Heart left ventricle (tissue), 16 donors: ENCODE measurements at regions of chr5 and their contacts with region 1.

Region 1: DNA sequence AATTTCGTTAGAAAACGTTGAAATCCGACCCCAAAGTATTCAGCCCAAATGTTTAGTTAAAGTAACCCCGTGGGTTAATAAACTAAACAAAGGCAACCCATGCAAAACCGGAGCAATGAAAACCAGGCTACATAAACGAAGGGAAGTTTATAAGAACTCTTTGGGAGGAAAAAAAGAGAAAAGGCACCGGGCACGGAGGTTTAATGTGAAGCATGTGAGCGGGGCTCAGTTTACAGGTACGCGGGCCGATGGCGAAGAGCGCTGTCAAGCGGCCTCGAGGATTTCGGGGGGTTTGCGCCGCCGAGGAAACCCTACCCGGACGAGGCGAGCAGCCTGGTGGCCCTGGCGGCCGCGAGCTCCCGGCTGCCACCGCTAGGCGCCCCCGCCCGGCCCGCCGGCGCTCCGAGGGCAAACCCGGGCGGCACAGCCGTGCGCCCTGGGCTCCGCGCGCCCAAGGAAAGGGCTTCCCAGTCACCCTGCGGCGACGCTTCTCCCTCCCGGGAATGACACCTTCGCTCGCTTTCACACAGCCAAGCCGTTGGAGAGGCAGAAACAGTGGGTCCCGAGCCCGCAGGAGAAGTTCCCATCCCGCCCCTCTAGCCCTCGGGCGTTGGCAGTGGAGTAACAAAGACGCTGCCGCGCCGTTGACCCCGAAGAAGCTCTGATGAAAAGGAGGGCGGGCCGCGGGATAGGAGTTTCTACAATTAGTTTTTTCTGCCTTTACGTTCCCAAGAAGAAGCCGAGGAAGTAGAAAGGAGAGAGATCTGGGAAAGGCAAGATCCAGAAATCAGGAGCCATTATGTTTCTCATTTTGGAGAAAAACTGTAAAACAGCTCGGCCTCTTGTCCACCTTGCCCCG is 126.0 kb downstream of the TMEM174 start:
- DNase-seq: no peak
- ATAC-seq: no peak
- H3K4me3 ChIP-seq: peak overlapping the region in 2 of 12 donors; percentile 5 to 9
- H3K27ac ChIP-seq: no peak overlapping the region
- H3K4me1 ChIP-seq: peaks cover 0 to 30% (median 10%) of the 10 kb centered on the region in 12 donors
- H3K27me3 ChIP-seq: peaks cover 66 to 100% (median 86%) of the 10 kb centered on the region in 9 donors
- CTCF ChIP-seq: peak in 4 of 12 donors; percentile 10 to 32 (median 16)
- POLR2A ChIP-seq: no peak

Region 2: GRCh38 chr5:73135429-73136054 is 163.5 kb before region 1 on chr5:
- intact Hi-C with region 1: no loop called
- DNase-seq: no peak
- ATAC-seq: no peak
- H3K4me3 ChIP-seq: no peak overlapping the region
- H3K27ac ChIP-seq: no peak overlapping the region
- H3K4me1 ChIP-seq: peaks cover 0 to 3% (median 0%) of the 10 kb centered on the region in 12 donors
- H3K27me3 ChIP-seq: peaks cover 0 to 34% (median 7%) of the 10 kb centered on the region in 9 donors
- CTCF ChIP-seq: no peak
- POLR2A ChIP-seq: no peak

Region 3: DNA sequence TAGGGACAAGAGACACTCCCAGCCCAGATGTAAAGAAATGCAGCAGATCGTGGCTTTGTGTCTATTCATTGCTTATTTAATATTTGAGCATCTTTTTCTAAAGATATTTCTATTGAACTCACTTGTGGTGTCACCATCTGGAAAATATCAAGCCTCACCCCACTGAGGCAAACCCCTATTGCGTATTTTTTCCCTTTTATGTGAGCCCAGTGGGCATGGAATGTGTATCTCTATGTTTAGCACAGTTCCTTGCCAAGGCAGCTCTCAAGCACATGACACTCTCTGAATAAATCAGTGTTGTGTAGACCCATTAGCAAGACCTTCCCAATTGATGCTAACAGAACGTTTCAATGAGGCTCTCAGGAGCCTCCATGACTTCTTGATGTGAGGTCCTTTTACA is 44.4 kb before region 1 on chr5:
- intact Hi-C with region 1: loop called in 1 of 10 experiments (anchors 5 kb)
- DNase-seq: no peak
- ATAC-seq: no peak
- H3K4me3 ChIP-seq: no peak overlapping the region
- H3K27ac ChIP-seq: no peak overlapping the region
- H3K4me1 ChIP-seq: no peaks in the 10 kb centered on the region
- H3K27me3 ChIP-seq: peaks cover 0 to 34% (median 15%) of the 10 kb centered on the region in 9 donors
- CTCF ChIP-seq: no peak
- POLR2A ChIP-seq: no peak

Region 4: GRCh38 chr5:73354406-73354805 is 55.4 kb after region 1 on chr5:
- intact Hi-C with region 1: no loop called
- DNase-seq: no peak
- ATAC-seq: no peak
- H3K4me3 ChIP-seq: no peak overlapping the region
- H3K27ac ChIP-seq: no peak overlapping the region
- H3K4me1 ChIP-seq: no peaks in the 10 kb centered on the region
- H3K27me3 ChIP-seq: peaks cover 0 to 48% (median 20%) of the 10 kb centered on the region in 9 donors
- CTCF ChIP-seq: no peak
- POLR2A ChIP-seq: no peak

Region 5: GRCh38 chr5:73387149-73387591 is 88.2 kb after region 1 on chr5:
- intact Hi-C with region 1: no loop called
- DNase-seq: no peak
- ATAC-seq: no peak
- H3K4me3 ChIP-seq: no peak overlapping the region
- H3K27ac ChIP-seq: no peak overlapping the region
- H3K4me1 ChIP-seq: peaks cover 0 to 4% (median 0%) of the 10 kb centered on the region in 12 donors
- H3K27me3 ChIP-seq: peaks cover 9 to 75% (median 32%) of the 10 kb centered on the region in 9 donors
- CTCF ChIP-seq: no peak
- POLR2A ChIP-seq: no peak

Region 6: DNA sequence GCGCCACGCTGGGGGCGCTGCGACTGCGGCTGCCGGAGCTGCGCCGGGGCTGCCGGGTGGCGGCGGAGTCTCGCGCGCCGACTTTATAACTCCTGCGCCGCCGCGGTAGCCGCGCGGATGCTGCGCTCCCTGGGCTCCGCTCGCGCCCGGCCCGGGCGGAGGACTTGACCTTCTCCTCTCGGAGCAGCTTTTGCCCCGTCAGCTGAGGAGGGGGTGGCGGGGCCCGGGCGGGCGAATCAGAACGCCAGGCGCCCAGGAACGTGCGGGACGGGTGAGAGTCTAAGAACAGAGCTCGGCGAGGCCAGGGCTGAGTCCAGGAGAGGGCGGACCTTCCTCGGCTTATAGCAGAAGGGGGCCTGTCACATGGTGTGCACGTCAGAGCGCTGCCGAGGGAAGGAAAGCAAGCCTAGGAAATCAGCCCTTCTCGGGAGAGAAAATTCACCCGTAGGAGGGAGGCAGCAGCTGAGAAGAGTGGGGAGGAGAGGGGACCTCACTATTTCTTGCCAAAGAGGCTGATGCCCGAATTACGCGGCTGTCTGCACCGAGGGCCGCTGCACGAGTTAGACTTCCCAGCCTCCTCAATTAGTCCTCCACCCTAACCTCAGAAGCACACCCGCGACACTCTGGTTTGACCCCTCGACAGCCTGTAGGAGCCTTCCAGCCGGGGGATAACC is 149.6 kb after region 1 on chr5 and contains the start of gene FOXD1:
- intact Hi-C with region 1: loop called in 1 of 10 experiments (anchors 10 kb)
- DNase-seq: peak; percentile 44 to 75 (median 59)
- ATAC-seq: peak in 3 of 4 donors; percentile 79 to 92 (median 86)
- H3K4me3 ChIP-seq: peak within 1 kb of the TSS; percentile 22 to 61 (median 46)
- H3K27ac ChIP-seq: no peak within 1 kb of the TSS
- H3K4me1 ChIP-seq: peaks cover 0 to 33% (median 16%) of the 10 kb centered on the region in 12 donors
- H3K27me3 ChIP-seq: peaks cover 83 to 89% (median 85%) of the 10 kb centered on the region in 9 donors
- CTCF ChIP-seq: peak in 1 of 12 donors; percentile 3
- POLR2A ChIP-seq: no peak
- total RNA-seq, gene FOXD1: 0.18 TPM in 1 of 9 donors, not detected in the others